Dorsolateral prefrontal cortex (tissue), 120 donors: ENCODE measurements at regions of chr3 and their contacts with region 1.

Region 1: DNA sequence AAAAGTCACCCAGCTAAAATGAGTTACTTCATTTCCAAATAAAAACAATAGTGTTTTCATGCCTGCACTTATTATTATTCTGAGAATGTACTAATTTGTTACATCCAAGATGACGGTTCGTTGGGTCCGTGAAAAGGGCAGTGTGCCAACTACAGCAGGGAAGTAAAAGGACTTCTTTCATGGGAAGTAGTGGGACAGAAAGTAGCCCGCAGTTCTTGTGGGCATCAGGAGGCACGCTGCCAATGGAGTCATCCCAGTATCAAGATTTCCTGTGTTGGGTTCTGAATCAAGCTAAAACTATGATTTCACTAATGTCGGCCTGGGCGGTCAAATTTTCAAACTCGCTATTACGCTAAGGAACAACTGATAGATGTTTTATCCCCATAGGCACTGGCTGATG is 254.5 kb upstream of the SOX2 start:
- DNase-seq: peak; percentile 46 to 96 (median 90)
- H3K4me3 ChIP-seq: peak overlapping the region in 46 of 59 donors; percentile 1 to 59 (median 30)
- H3K27ac ChIP-seq: peak overlapping the region; percentile 54 to 97 (median 92)
- H3K27me3 ChIP-seq: no peaks in the 10 kb centered on the region
- CTCF ChIP-seq: peak in 3 of 56 donors; percentile 12 to 24 (median 15)

Region 2: GRCh38 chr3:181326637-181327223 is 130.5 kb before region 1 on chr3:
- intact Hi-C with region 1: loop called (anchors 1 to 5 kb)
- DNase-seq: peak in 1 of 10 donors; percentile 13
- H3K4me3 ChIP-seq: peak overlapping the region in 14 of 59 donors; percentile 0 to 46 (median 12)
- H3K27ac ChIP-seq: peak overlapping the region in 33 of 59 donors; percentile 2 to 79 (median 58)
- H3K27me3 ChIP-seq: no peaks in the 10 kb centered on the region
- CTCF ChIP-seq: peak; percentile 58 to 91 (median 80)

Region 3: DNA sequence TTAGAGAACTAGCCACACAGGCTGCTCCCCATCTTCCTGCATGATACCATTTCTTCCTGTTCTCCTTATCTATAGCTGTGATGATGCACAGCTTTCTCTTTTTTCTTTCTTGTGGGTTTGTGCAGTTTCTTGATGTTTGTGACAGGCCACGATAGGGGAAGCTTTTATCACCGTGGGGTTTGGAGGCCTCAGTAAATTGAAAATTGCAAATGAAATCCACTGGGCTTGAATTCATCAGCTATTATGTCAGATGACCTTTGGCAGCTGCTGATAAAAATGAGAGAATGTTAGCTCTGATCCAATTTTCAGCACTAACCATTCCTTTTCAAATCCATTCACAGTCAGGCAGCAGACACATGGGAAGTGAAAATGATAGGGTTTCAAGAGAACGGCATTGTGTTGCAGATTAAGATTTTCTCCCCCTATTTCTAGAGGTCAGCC is 77.6 kb after region 1 on chr3:
- intact Hi-C with region 1: no loop called
- DNase-seq: no peak
- H3K4me3 ChIP-seq: peak overlapping the region in 27 of 59 donors; percentile 1 to 40 (median 16)
- H3K27ac ChIP-seq: peak overlapping the region in 42 of 59 donors; percentile 3 to 73 (median 42)
- H3K27me3 ChIP-seq: no peaks in the 10 kb centered on the region
- CTCF ChIP-seq: no peak

Region 4: GRCh38 chr3:181555681-181556080 is 98.5 kb after region 1 on chr3:
- intact Hi-C with region 1: loop called (anchors 2 to 5 kb)
- DNase-seq: peak in 9 of 10 donors; percentile 41 to 85 (median 76)
- H3K4me3 ChIP-seq: peak overlapping the region in 2 of 59 donors; percentile 8 to 33
- H3K27ac ChIP-seq: peak overlapping the region in 41 of 59 donors; percentile 10 to 78 (median 51)
- H3K27me3 ChIP-seq: no peaks in the 10 kb centered on the region
- CTCF ChIP-seq: no peak

Region 5: GRCh38 chr3:181561139-181562031 is 104.2 kb after region 1 on chr3:
- intact Hi-C with region 1: loop called (anchors 2 to 5 kb)
- DNase-seq: no peak
- H3K4me3 ChIP-seq: peak overlapping the region in 42 of 59 donors; percentile 0 to 47 (median 18)
- H3K27ac ChIP-seq: peak overlapping the region in 55 of 59 donors; percentile 1 to 92 (median 69)
- H3K27me3 ChIP-seq: no peaks in the 10 kb centered on the region
- CTCF ChIP-seq: no peak

Region 6: GRCh38 chr3:181567311-181568075 is 110.3 kb after region 1 on chr3:
- intact Hi-C with region 1: loop called in 1 of 2 experiments (anchors 5 kb)
- DNase-seq: no peak
- H3K4me3 ChIP-seq: peak overlapping the region in 53 of 59 donors; percentile 4 to 58 (median 36)
- H3K27ac ChIP-seq: peak overlapping the region; percentile 23 to 92 (median 82)
- H3K27me3 ChIP-seq: no peaks in the 10 kb centered on the region
- CTCF ChIP-seq: peak in 1 of 56 donors; percentile 2

Region 7: DNA sequence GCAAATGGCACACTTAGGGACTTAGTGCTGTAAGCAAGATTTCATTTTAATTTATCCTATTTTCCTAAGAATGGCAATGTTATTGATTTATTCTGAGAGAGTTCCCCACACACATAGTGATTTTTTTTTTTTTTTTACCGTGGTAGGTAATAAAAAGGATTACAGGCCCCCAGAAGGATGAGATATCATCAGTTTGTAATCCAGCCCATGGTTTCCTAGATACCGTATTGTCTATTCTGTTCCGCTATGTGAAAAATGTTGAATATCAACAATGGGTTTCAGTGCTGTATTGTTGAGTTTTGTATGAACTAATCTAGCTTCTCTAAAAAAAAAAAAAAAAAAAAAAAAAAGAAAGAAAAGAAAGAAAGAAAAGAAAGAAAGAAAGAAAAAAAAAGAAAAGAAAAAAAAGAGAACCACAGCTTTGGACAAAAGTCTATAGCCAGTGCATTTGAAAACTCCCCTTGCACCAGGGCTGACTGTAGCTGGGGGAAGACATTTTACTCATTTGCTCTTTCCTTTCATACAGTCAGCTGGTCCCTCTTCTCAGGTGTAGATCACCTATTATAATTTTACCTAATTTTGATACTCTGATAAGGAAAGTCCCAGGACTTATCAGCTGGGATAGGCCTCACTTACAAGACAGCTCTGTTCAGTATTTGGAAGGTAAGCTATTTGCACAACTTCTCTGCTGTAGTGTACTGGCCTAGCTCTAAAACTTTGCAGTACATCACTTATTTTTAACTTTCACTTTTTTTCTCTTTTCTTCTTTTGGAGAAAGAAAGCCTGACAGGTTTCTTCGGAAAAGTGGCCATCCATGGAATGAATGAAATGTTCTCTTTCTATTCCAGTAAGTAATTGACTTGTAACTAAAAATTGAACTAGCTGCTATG is 153.1 kb after region 1 on chr3:
- intact Hi-C with region 1: loop called in 1 of 2 experiments (anchors 5 kb)
- DNase-seq: no peak
- H3K4me3 ChIP-seq: peak overlapping the region in 57 of 59 donors; percentile 13 to 66 (median 42)
- H3K27ac ChIP-seq: peak overlapping the region; percentile 2 to 95 (median 85)
- H3K27me3 ChIP-seq: no peaks in the 10 kb centered on the region
- CTCF ChIP-seq: peak in 2 of 56 donors; percentile 13 to 16

Region 8: DNA sequence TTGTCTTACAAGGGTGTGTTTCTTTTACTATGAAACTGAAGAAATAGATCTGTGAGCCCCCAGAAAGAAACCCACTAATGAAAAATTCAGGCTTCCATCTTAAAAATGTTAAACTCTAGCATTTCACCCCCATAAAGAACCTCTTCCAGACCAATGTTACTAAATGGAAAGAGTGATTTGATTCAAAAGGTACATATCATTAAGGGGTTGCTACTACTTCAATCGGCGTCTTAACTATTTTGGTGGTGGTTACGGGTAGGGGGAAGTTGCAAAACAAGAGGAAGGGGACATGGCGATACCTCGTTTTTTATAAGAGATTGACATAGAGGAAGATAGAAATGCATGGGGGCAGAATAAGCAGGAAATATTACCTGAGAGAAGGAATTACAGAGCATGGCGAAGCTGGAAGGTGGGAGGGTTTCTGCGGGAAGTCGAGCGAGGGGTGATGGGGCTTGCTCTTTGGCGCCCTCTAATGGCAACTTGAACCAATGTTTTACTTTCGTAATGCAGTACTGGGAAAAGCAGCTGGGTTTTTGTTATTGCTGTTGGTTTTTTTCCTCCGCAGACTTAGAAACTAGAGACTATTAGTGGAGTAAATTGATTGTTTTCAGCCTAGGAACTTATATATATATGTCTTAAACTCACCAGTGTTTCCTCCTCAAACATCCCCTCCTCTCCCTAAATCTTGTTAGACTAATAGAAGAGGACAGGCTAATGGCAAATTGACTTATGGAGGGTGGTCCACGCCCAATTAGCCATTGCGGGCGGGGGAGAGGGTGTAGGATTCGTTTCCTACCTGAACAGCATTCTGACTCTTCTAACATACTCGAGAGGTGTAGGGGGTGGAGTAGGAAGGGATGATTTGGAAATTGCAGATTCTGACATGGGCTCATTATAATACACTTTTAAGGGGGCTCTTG is 243.2 kb after region 1 on chr3:
- intact Hi-C with region 1: loop called (anchors 1 to 2 kb)
- DNase-seq: peak in 8 of 10 donors; percentile 61 to 80 (median 74)
- H3K4me3 ChIP-seq: peak overlapping the region; percentile 10 to 93 (median 70)
- H3K27ac ChIP-seq: peak overlapping the region; percentile 77 to 100 (median 98)
- H3K27me3 ChIP-seq: peaks cover 0 to 86% (median 46%) of the 10 kb centered on the region in 45 donors
- CTCF ChIP-seq: peak; percentile 75 to 96 (median 88)